ENCODE measurements at regions of chr15 and their contacts with region 1.

Region 1: GRCh38 chr15:59688841-59689625 is at the start of gene BNIP2:
- DNase-seq: peak; percentile 96 to 100 (median 100)
- ATAC-seq: peak; percentile 86
- H3K4me3 ChIP-seq: peak within 1 kb of the TSS; percentile 97
- H3K4me3 Mint-ChIP-seq: peak within 1 kb of the TSS; percentile 95
- H3K27ac ChIP-seq: peak within 1 kb of the TSS; percentile 99 to 100
- H3K27ac Mint-ChIP-seq: peak within 1 kb of the TSS; percentile 99
- H3K4me1 ChIP-seq: peaks cover 33% of the 10 kb centered on the region
- H3K4me1 Mint-ChIP-seq: peaks cover 43% of the 10 kb centered on the region
- H3K27me3 ChIP-seq: no peaks in the 10 kb centered on the region
- H3K27me3 Mint-ChIP-seq: no peaks in the 10 kb centered on the region
- CTCF ChIP-seq: no peak
- total RNA-seq, gene BNIP2: 109 TPM

Region 2: DNA sequence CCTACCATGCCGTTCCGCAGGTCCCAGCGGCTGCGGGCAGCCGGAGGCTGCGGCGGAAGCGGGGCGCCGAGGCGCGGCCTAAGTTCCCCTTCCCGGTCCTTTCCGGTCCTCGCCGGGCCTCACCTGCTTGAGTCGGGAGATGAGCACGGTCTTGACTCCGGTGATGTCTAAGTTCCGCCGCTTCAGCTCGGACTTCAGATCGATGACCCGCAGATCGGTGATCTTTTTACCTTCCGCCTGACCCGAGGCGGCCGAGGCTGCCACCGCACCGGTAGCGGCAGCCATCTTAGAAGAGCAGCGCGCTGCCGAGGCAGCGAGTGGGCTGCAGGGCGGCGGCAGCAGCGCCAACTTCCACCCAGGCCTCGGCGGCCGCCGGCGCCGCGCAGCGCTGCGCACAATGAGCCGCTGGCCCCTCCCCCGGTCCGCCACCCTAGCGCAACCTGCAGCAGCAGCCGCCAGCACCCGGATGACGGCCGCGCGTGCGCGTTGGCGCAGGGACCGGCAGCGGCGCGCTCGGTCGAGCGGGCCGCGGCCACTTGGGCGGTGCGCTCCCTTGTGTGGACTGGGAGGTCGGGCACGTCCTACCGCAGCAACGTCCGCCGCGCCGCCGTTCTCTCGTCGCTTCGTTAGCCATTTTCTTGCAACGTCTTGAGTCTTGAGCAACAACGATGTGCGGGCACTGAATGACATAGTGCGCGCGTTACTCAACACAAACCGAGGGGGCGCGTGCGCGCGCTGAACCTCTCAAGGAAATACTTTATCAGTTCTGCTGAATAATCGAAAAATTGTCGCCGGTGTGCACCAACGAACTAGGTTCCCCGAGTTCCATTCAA is 755.5 kb before region 1 on chr15 and contains the start of gene SLTM:
- CTCF ChIA-PET with region 1: no interaction called
- POLR2A ChIA-PET with region 1: no interaction called
- intact Hi-C with region 1: loop called in 1 of 2 experiments (anchors 5 kb)
- DNase-seq: peak; percentile 86 to 99 (median 92)
- ATAC-seq: peak; percentile 90
- H3K4me3 ChIP-seq: peak within 1 kb of the TSS; percentile 86
- H3K4me3 Mint-ChIP-seq: peak within 1 kb of the TSS; percentile 96
- H3K27ac ChIP-seq: peak within 1 kb of the TSS; percentile 95 to 96
- H3K27ac Mint-ChIP-seq: peak within 1 kb of the TSS; percentile 99
- H3K4me1 ChIP-seq: peaks cover 15% of the 10 kb centered on the region
- H3K4me1 Mint-ChIP-seq: peaks cover 34% of the 10 kb centered on the region
- H3K27me3 ChIP-seq: no peaks in the 10 kb centered on the region
- H3K27me3 Mint-ChIP-seq: no peaks in the 10 kb centered on the region
- CTCF ChIP-seq: no peak
- total RNA-seq, gene SLTM: 183 to 189 TPM

Region 3: DNA sequence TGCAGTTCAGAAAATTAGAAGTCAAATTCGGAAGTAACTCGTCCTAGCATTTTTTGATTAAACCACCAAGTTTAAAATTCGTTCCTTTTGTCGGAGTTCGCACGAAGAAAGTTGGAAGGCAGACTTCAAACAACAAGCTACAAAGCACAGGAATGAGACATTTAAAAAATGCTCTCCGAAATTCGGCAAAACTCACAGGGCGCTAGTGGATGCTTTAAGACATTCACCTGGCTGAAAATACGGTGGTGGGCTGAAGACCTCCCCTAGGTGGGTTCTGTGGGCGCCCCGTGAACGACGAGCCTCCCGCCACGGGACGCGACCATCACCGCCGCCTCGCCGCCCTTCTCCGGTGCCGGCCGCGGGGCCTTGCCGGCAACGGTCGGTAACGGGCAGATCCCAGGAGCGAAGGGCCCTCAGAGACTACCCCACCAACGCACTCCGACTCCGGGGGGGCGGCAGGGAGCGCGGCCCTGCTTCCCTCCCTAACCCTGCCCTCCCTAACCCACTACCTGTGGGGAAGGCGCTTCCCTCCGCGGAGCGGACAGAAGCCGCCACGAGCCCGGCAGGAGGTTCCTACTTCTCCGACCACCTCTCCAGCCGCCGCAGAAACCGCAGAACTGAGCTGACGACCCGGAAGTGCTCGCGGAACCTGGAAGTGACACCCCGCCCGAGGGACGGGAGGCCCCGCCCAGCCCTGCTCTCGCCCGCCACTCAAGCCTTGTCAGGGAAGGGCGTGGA is 32.0 kb before region 1 on chr15 and contains the start of gene GTF2A2:
- CTCF ChIA-PET with region 1: interaction called, 10 read pairs
- POLR2A ChIA-PET with region 1: interaction called, 68 read pairs
- intact Hi-C with region 1: loop called (anchors 1 to 2 kb)
- DNase-seq: peak; percentile 82 to 96 (median 89)
- ATAC-seq: peak; percentile 98
- H3K4me3 ChIP-seq: peak within 1 kb of the TSS; percentile 94
- H3K4me3 Mint-ChIP-seq: peak within 1 kb of the TSS; percentile 57
- H3K27ac ChIP-seq: peak within 1 kb of the TSS; percentile 77 to 86
- H3K27ac Mint-ChIP-seq: no peak within 1 kb of the TSS
- H3K4me1 ChIP-seq: peaks cover 17% of the 10 kb centered on the region
- H3K4me1 Mint-ChIP-seq: no peaks in the 10 kb centered on the region
- H3K27me3 ChIP-seq: no peaks in the 10 kb centered on the region
- H3K27me3 Mint-ChIP-seq: no peaks in the 10 kb centered on the region
- CTCF ChIP-seq: no peak
- total RNA-seq, gene GTF2A2: 40.3 to 44.6 TPM

Region 4: DNA sequence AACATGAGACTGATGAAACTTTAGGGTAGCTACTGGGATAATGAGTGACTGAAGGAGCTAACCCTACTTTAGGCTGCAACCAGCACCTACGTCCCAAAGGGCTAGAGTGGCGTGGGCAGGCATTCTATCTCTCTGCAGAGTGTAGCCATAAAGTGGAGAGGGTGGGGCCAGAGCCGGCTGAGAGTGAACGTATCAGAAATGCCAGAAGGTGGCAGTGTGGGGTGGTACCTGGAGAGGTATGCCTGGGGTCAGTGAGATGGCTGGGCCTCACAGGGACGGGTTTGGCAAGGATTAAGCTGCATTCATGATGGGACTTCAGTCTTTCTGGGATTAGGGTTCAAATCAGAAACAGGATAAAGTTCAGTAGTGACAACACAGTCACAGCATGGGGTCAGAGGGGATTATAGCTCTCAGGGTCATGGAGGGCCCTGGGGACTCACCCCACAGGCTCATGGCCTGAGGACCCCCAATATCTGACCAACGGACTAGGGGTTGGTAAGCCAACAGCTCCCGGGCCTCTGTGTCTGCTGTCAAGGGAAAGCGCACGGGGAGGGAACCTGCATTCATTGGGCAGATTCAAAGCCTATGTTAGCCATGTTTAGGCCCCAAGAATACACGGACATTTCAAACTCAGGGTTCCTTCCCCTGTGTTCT is 228.6 kb after region 1 on chr15:
- CTCF ChIA-PET with region 1: no interaction called
- POLR2A ChIA-PET with region 1: no interaction called
- intact Hi-C with region 1: loop called in 1 of 2 experiments (anchors 5 kb)
- DNase-seq: peak; percentile 47 to 79 (median 60)
- ATAC-seq: peak; percentile 80
- H3K4me3 ChIP-seq: no peak overlapping the region
- H3K4me3 Mint-ChIP-seq: no peak overlapping the region
- H3K27ac ChIP-seq: no peak overlapping the region
- H3K27ac Mint-ChIP-seq: no peak overlapping the region
- H3K4me1 ChIP-seq: peaks cover 19% of the 10 kb centered on the region
- H3K4me1 Mint-ChIP-seq: peaks cover 15% of the 10 kb centered on the region
- H3K27me3 ChIP-seq: no peaks in the 10 kb centered on the region
- H3K27me3 Mint-ChIP-seq: peaks cover 30% of the 10 kb centered on the region
- CTCF ChIP-seq: peak; percentile 68

Region 5: DNA sequence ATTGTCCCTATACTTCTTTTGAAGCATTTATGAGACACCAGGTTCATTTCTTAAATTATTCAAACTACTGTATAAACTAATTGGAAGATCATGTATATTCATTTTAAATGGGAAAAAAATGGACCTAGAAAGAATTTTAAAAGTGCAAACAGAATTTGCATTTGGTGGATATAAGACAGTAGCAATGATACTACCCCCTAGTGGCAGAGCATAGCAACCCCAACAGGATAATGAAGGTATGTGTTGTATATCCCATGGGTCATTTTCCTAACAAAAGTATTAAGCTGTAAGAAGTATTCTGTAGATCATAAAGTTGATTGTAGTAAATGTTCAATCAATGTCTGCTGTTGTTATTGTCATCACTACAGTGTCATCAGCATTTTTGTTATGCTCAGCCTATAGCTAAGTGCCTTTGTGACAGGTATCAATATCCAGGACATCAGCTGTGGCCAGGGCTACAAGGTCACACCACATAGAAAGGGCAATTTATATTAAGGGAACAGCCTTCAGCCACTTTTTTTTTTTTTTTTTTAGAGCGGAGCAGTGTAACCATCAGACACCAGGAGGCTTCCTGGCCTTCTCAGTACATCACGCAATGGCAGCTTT is 490.9 kb after region 1 on chr15:
- CTCF ChIA-PET with region 1: interaction called, 7 read pairs
- POLR2A ChIA-PET with region 1: no interaction called
- intact Hi-C with region 1: loop called (anchors 2 kb)
- DNase-seq: peak in 11 of 14 experiments; percentile 2 to 72 (median 14)
- ATAC-seq: peak; percentile 64
- H3K4me3 ChIP-seq: no peak overlapping the region
- H3K4me3 Mint-ChIP-seq: no peak overlapping the region
- H3K27ac ChIP-seq: no peak overlapping the region
- H3K27ac Mint-ChIP-seq: no peak overlapping the region
- H3K4me1 ChIP-seq: no peaks in the 10 kb centered on the region
- H3K4me1 Mint-ChIP-seq: no peaks in the 10 kb centered on the region
- H3K27me3 ChIP-seq: no peaks in the 10 kb centered on the region
- H3K27me3 Mint-ChIP-seq: peaks cover 23% of the 10 kb centered on the region
- CTCF ChIP-seq: peak; percentile 99

Region 6: DNA sequence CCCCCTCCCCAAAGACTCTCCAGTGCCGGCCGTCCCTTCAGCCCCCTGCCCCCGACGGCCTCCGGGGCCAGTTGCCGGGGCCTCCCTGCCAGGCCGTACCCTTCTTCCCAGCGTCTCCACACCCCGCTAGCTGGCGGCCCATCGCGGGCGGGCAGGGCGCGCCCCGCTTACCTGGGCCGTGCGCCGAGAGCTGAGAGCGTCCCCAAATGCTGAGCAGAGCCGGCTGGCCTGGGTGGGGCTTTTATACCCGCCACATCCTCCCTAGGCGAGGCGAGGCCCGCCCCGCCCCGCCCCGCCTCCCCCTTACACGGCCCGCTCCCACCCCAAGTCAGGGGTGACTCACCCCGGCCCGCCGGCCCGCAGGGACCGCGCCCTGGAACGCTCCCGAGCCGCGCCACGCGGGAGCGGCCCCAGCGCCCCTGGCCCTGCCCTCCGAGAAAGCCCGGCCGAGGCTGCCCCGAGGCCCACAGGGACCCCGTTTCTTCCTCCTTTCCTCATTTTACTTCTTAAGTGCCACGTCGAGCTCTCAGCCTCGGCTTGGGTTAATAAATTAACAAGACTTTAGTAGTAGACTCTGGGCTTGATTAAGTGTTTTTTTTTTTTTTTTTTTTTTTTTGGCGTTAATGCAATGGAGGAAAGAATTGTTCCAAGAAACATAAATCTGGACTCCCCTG is 708.9 kb after region 1 on chr15 and contains the start of gene ANXA2:
- CTCF ChIA-PET with region 1: interaction called, 3 read pairs
- POLR2A ChIA-PET with region 1: interaction called, 14 read pairs
- intact Hi-C with region 1: loop called in 1 of 2 experiments (anchors 10 kb)
- DNase-seq: peak; percentile 66 to 93 (median 84)
- ATAC-seq: peak; percentile 77
- H3K4me3 ChIP-seq: peak within 1 kb of the TSS; percentile 72
- H3K4me3 Mint-ChIP-seq: peak within 1 kb of the TSS; percentile 92
- H3K27ac ChIP-seq: peak within 1 kb of the TSS; percentile 37 to 75
- H3K27ac Mint-ChIP-seq: peak within 1 kb of the TSS; percentile 97
- H3K4me1 ChIP-seq: peaks cover 58% of the 10 kb centered on the region
- H3K4me1 Mint-ChIP-seq: peaks cover 48% of the 10 kb centered on the region
- H3K27me3 ChIP-seq: no peaks in the 10 kb centered on the region
- H3K27me3 Mint-ChIP-seq: peaks cover 10% of the 10 kb centered on the region
- CTCF ChIP-seq: no peak
- total RNA-seq, gene ANXA2: 70.8 to 74.5 TPM

Region 7: GRCh38 chr15:60496853-60497252 is 807.8 kb after region 1 on chr15:
- CTCF ChIA-PET with region 1: no interaction called
- POLR2A ChIA-PET with region 1: no interaction called
- intact Hi-C with region 1: no loop called
- DNase-seq: no peak
- ATAC-seq: no peak
- H3K4me3 ChIP-seq: no peak overlapping the region
- H3K4me3 Mint-ChIP-seq: no peak overlapping the region
- H3K27ac ChIP-seq: no peak overlapping the region
- H3K27ac Mint-ChIP-seq: peak overlapping the region; percentile 59
- H3K4me1 ChIP-seq: no peaks in the 10 kb centered on the region
- H3K4me1 Mint-ChIP-seq: peaks cover 13% of the 10 kb centered on the region
- H3K27me3 ChIP-seq: no peaks in the 10 kb centered on the region
- H3K27me3 Mint-ChIP-seq: no peaks in the 10 kb centered on the region
- CTCF ChIP-seq: no peak